Ovary (tissue), 10 donors: ENCODE measurements at regions of chr20 and their contacts with region 1.

Region 1: GRCh38 chr20:6081236-6081635 is 27.4 kb upstream of the LRRN4 start:
- DNase-seq: no peak
- H3K4me3 ChIP-seq: no peak overlapping the region
- H3K27ac ChIP-seq: no peak overlapping the region
- H3K4me1 ChIP-seq: no peaks in the 10 kb centered on the region
- H3K27me3 ChIP-seq: no peaks in the 10 kb centered on the region
- CTCF ChIP-seq: no peak
- EP300 ChIP-seq: no peak
- POLR2A ChIP-seq: no peak

Region 2: GRCh38 chr20:5950271-5951031 is 130.8 kb before region 1 on chr20 and contains the starts of genes MCM8 and TRMT6:
- intact Hi-C with region 1: loop called in 1 of 4 experiments (anchors 5 kb)
- DNase-seq: peak; percentile 93 to 96 (median 93)
- H3K4me3 ChIP-seq: peak within 1 kb of the TSS; percentile 46
- H3K27ac ChIP-seq: peak within 1 kb of the TSS in 1 of 2 donors; percentile 58
- H3K4me1 ChIP-seq: peaks cover 2% of the 10 kb centered on the region
- H3K27me3 ChIP-seq: no peaks in the 10 kb centered on the region
- CTCF ChIP-seq: no peak
- EP300 ChIP-seq: peak; percentile 49
- POLR2A ChIP-seq: no peak
- total RNA-seq, gene MCM8: 2.3 to 4.9 (median 4.3) TPM
- total RNA-seq, gene TRMT6: 5.8 to 19.3 (median 11.5) TPM

Region 3: DNA sequence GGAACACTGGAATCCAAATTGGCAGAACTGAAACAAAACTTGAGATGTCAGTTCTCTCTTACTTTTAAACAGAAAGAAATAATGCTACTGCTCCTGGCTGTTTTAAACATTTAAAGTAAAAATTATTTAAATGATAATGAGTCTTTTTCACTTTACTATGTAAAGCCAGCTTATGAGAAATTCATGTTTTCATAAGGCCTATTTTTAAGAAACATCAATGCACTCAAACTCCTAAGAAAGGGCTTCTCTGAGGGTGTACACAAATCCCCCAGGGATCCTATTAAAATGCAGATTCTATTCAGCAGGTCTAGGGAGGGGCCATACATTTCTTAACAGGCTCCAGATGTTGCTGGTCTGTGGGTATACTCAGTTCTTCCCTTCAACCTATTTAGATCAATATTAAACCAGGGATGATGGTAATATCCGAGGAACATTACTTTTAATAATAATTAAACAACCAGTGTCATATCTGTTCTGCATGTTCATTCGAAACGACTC is 39.3 kb after region 1 on chr20:
- intact Hi-C with region 1: no loop called
- DNase-seq: no peak
- H3K4me3 ChIP-seq: no peak overlapping the region
- H3K27ac ChIP-seq: no peak overlapping the region
- H3K4me1 ChIP-seq: peaks cover 3% of the 10 kb centered on the region
- H3K27me3 ChIP-seq: no peaks in the 10 kb centered on the region
- CTCF ChIP-seq: no peak
- EP300 ChIP-seq: no peak
- POLR2A ChIP-seq: no peak